Ascending aorta (tissue), 2 donors: ENCODE measurements at regions of chr3 and their contacts with region 1.

Region 1: DNA sequence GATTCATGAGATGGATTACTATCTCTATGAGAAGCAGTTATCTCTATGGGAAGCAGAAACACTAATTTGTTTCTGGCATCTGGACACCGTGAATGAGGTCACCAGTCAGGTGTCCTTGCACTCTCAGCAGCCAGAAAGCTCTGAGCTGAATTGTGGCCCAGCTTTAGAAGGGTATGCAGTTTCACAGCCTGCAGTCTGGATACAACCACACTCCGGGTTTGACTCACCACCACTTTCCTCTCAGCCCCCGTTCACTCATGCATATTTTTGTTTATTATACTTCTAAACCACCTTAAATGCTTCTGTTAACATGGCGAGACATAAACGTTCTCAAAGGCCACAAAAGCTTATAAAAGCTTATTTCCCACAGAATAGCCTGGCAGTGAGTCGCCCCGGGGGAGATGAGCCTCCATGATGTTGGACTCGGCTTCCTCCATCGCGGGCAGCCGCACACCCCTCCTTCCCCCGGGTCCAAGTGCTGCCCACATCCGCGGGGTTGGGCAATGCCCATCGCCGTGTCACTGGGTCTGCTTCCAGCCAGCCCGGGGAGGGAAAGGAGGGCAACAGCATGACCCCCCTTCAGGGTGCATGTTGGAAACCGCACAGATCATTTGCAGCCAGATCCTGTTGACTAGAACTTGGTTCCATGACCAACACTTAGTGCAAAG is 16.8 kb upstream of the SLC41A3 start:
- DNase-seq: peak in 1 of 2 donors; percentile 86
- H3K4me3 ChIP-seq: peak overlapping the region in 1 of 2 donors; percentile 48
- H3K27ac ChIP-seq: peak overlapping the region; percentile 96 to 98
- H3K4me1 ChIP-seq: peaks cover 24 to 46% of the 10 kb centered on the region in 2 donors
- H3K27me3 ChIP-seq: no peaks in the 10 kb centered on the region
- CTCF ChIP-seq: no peak

Region 2: DNA sequence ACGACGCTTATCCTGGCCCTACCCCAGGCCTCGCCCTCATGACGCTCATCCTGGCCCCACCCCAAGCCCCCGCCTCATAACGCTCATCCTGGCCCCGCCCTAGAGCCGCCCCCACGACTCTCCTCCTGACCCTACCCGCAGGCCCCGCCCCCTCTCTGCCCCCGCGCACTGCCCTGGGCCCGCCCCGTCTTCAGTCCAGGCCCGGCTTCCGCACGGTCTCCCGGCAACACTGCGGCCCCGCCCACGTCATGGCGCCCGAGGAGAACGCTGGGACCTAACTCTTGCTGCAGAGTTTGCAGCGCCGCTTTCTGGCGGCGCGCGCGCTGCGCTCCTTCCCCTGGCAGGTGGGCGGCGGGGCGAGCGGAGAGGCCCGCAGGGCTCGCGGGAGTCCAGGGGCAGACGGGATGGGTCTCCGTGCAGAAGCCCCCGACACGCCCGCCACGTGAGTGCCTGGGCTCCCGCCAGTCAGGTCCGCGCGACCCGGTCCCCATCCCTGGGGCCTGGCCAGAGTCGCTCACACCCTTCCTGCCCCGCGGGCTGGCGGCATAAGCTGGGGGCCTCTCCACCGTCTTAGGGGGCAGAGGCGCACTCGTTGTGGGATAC is 184.3 kb before region 1 on chr3:
- intact Hi-C with region 1: loop called (anchors 5 kb)
- DNase-seq: no peak
- H3K4me3 ChIP-seq: peak overlapping the region; percentile 90 to 91
- H3K27ac ChIP-seq: peak overlapping the region; percentile 61 to 67
- H3K4me1 ChIP-seq: peaks cover 0 to 6% of the 10 kb centered on the region in 2 donors
- H3K27me3 ChIP-seq: no peaks in the 10 kb centered on the region
- CTCF ChIP-seq: peak in 1 of 3 experiments; percentile 35